Stomach (tissue), 19 donors: ENCODE measurements at regions of chr18 and their contacts with region 1.

Region 1: DNA sequence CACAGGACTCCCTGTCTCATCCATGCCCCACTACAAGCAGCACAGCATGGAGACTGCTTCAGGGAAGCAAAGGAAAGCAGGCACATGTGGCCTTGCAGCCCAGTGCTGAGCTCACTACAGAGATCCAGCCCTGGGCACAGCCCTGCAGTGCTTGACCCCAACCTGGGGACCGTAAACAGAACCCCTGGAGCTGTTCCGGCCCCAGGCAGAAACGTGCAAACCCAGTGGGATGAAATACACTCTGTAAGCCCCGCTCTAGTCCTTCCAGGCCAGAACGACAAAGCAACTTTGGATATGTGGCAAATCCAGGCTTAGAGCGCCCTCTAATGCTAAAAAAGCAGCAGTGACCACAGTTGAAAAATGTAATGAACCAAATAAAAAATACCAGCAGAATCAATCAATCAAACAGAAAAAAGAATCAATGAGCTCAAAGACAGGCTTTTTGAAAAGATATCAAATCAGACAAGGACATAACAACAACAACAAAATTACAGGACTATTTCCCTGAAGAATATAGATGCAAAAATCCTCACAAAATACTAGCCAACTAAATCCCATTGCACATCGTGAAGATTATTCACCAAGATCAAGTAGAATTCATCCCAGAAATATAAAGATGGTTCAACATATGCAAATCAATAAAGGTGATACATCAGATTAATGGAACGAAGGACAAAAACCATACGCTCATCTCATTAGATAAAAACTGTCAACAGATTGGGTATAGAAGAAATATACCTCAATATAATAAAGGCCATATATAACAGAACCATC is 45.6 kb downstream of the ZNF519 start:
- DNase-seq: peak in 1 of 2 donors; percentile 73
- H3K4me3 ChIP-seq: no peak overlapping the region
- H3K27ac ChIP-seq: no peak overlapping the region
- H3K4me1 ChIP-seq: peaks cover 0 to 4% (median 0%) of the 10 kb centered on the region in 4 donors
- H3K27me3 ChIP-seq: no peaks in the 10 kb centered on the region
- CTCF ChIP-seq: peak in 5 of 7 experiments; percentile 30 to 76 (median 57)
- EP300 ChIP-seq: no peak
- POLR2A ChIP-seq: no peak

Region 2: GRCh38 chr18:13726232-13726971 is 360.2 kb before region 1 on chr18 and contains the starts of genes FAM210A and RNMT:
- intact Hi-C with region 1: no loop called
- DNase-seq: peak; percentile 96 to 99
- H3K4me3 ChIP-seq: peak within 1 kb of the TSS; percentile 74 to 100 (median 98)
- H3K27ac ChIP-seq: peak within 1 kb of the TSS; percentile 92 to 97 (median 94)
- H3K4me1 ChIP-seq: peaks cover 13 to 53% (median 39%) of the 10 kb centered on the region in 4 donors
- H3K27me3 ChIP-seq: no peaks in the 10 kb centered on the region
- CTCF ChIP-seq: no peak
- EP300 ChIP-seq: no peak
- POLR2A ChIP-seq: peak in 1 of 4 donors; percentile 24
- total RNA-seq, gene FAM210A: 1.4 to 35.0 (median 13.0) TPM
- total RNA-seq, gene RNMT: 11.4 to 73.5 (median 31.3) TPM

Region 3: GRCh38 chr18:13823707-13824395 is 262.8 kb before region 1 on chr18 and contains the start of gene MC5R:
- intact Hi-C with region 1: loop called (anchors 5 kb)
- DNase-seq: peak; percentile 72 to 88
- H3K4me3 ChIP-seq: peak within 1 kb of the TSS; percentile 35 to 49 (median 45)
- H3K27ac ChIP-seq: no peak within 1 kb of the TSS
- H3K4me1 ChIP-seq: peaks cover 0 to 10% (median 8%) of the 10 kb centered on the region in 4 donors
- H3K27me3 ChIP-seq: peaks cover 0 to 56% (median 0%) of the 10 kb centered on the region in 3 donors
- CTCF ChIP-seq: peak in 5 of 7 experiments; percentile 88 to 94 (median 91)
- EP300 ChIP-seq: no peak
- POLR2A ChIP-seq: no peak
- total RNA-seq, gene MC5R: not detected